Ovary (tissue), 10 donors: ENCODE measurements at regions of chr20 and their contacts with region 1.

Region 1: GRCh38 chr20:36391955-36392354 is 85.8 kb downstream of the DLGAP4 start:
- DNase-seq: no peak
- H3K4me3 ChIP-seq: no peak overlapping the region
- H3K27ac ChIP-seq: no peak overlapping the region
- H3K4me1 ChIP-seq: peaks cover 9% of the 10 kb centered on the region
- H3K27me3 ChIP-seq: no peaks in the 10 kb centered on the region
- CTCF ChIP-seq: no peak
- EP300 ChIP-seq: no peak
- POLR2A ChIP-seq: no peak

Region 2: DNA sequence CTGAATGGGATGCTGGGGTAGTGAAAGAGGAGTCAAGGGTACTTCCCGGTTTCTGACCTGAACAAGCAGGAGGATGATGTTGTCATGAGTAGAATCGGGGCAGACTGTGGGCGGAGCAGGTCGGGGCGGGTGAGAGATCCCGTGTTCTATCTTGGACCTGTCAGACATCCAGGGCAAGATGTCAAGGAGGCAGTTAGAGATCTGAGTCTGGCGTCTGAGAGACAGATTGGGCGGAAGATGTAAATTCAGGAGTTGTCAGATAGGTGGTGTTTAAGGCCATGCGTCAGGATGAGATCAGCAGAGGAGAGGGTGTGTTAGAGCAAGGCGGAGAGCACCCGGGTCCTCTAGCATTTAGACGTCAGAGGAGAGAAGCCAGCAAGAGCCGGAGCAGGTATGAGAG is 29.7 kb after region 1 on chr20:
- intact Hi-C with region 1: loop called in 1 of 4 experiments (anchors 2 kb)
- DNase-seq: no peak
- H3K4me3 ChIP-seq: no peak overlapping the region
- H3K27ac ChIP-seq: no peak overlapping the region
- H3K4me1 ChIP-seq: no peaks in the 10 kb centered on the region
- H3K27me3 ChIP-seq: no peaks in the 10 kb centered on the region
- CTCF ChIP-seq: no peak
- EP300 ChIP-seq: no peak
- POLR2A ChIP-seq: no peak